ENCODE measurements at regions of chr4 and their contacts with region 1.

Region 1: GRCh38 chr4:139734875-139735380 is 69.3 kb downstream of the MGST2 start:
- DNase-seq: peak; percentile 51 to 93
- H3K4me3 ChIP-seq: peak overlapping the region; percentile 56 to 66
- H3K27ac ChIP-seq: peak overlapping the region; percentile 69 to 81
- H3K4me1 ChIP-seq: peaks cover 0 to 20% of the 10 kb centered on the region in 2 donors
- H3K27me3 ChIP-seq: no peaks in the 10 kb centered on the region
- CTCF ChIP-seq: peak; percentile 89 to 94 (median 91)

Region 2: DNA sequence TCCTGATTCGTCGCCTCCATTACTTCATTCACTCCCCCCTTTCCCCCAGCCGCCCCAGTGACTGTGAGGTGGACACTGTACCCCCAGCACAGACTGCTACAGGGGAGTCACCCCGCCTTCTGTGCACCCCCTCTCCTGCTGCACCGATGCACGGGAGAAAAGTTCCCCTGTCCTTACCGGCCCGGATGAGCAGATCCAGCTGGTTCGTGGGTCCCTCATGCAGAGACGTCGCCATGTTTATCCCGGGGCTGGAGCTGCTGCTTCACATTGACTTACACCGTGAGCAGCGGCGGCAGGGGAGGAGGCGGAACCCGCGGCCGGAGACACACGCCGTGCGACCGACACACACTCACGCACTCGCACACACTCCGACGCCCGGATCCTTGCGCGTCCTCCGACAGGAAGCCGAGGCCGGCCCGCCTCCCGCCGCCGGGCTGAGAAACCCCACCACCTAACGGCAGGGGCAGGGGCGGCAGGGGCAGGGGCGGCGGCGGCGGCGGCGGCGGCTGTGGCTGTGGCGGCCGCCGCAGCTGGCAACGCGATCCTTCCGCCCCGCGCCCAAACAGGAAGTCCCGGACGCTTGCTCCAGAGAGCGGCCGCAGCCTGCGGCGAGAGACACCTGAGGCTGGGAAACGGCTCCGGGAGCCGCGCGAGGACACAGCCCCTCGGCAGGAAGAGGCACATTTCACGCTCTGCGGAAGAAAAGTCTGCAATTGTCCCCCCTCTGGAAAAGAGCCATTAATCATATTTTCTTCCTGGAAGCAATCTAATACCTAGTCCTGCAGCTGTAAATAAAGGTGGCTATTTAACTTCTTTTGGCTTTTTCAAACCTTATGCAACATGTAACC is 650.7 kb before region 1 on chr4:
- intact Hi-C with region 1: no loop called
- DNase-seq: peak; percentile 60 to 93
- H3K4me3 ChIP-seq: peak overlapping the region; percentile 83 to 92
- H3K27ac ChIP-seq: peak overlapping the region; percentile 81 to 97
- H3K4me1 ChIP-seq: peaks cover 0 to 6% of the 10 kb centered on the region in 2 donors
- H3K27me3 ChIP-seq: no peaks in the 10 kb centered on the region
- CTCF ChIP-seq: peak in 2 of 3 experiments; percentile 25 to 40

Region 3: GRCh38 chr4:139656614-139657486 is 78.1 kb before region 1 on chr4:
- intact Hi-C with region 1: loop called (anchors 1 kb)
- DNase-seq: peak in 1 of 2 donors; percentile 72
- H3K4me3 ChIP-seq: peak overlapping the region in 1 of 2 donors; percentile 22
- H3K27ac ChIP-seq: no peak overlapping the region
- H3K4me1 ChIP-seq: peaks cover 0 to 10% of the 10 kb centered on the region in 2 donors
- H3K27me3 ChIP-seq: no peaks in the 10 kb centered on the region
- CTCF ChIP-seq: peak; percentile 63 to 82 (median 82)

Region 4: DNA sequence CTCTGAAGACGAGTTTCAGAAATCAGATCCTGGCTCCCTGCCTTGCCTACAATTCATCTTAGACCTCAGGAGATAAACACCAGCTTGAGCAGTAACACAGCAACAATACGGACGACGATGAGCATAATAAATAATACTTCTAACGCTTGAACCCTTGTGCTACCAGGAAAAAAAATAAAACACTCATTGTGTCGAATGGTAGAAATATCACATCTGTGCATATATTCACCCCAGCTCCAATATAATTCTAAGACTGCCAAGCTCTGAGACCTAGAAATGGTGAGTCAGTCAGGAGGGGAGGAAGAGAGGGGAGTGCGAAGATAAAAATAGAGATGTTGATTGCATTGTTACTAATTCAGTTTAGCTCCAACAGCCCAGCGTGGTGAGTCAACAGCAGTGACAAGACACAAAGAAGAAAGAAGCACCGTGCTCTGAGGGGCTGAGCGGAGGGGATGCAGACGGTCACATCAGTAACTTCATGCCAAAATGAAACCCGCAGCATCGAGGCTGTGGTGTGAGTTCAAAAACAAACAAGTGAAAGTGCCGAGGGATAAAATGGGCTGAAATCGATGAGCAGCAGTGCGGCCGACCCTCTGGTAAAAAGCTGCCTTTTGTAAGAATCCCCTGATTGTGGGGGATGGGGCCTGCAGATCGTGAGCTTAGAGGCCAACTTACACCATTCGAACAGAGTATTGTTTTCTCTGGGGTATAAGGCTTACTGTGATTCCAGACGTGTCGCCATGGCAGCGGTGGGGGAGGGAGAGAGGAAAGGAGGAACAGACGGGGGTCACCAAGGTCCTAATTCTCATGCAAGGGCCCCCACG is 81.1 kb after region 1 on chr4:
- intact Hi-C with region 1: loop called (anchors 5 kb)
- DNase-seq: peak in 1 of 2 donors; percentile 72
- H3K4me3 ChIP-seq: peak overlapping the region; percentile 36 to 74
- H3K27ac ChIP-seq: peak overlapping the region; percentile 52 to 87
- H3K4me1 ChIP-seq: peaks cover 6 to 16% of the 10 kb centered on the region in 2 donors
- H3K27me3 ChIP-seq: no peaks in the 10 kb centered on the region
- CTCF ChIP-seq: no peak

Region 5: DNA sequence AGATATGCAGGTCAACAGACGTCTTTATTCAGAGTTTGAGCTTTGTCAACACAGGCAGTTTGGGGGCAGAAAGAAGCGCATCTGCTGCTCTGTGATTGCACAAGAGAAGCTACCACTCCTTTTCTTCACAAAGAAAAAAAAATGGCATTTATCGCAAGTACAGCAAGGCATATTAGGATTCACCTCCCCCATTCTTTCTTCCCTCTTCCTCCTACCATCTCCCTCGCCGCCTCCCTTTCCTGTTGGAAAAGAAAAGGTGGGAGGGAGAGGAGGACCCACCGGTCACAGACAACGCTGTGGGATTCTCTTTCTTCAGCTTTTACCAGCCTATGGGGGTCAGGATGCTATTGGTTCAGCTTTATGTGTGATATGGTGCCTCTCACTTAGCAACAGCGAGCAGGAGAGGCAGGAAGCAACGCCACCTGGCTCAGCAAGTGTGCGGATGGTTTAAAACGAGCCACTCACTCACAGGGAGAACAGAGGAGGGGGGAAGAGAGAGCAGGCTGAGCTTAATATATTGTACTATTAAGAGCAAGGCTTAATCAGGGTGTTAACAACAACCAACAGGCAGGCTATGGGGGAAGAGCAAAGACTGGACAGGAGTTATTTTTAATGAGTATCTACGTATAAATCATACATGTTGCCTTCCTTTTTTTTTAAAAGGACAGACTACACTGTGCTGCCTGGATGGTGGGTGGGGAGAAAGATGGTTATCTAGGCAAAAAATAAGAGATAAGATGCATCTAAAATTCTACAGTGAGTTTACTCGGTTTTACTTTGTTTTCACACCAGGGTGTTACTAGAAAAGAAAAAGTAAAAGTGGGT is 314.3 kb after region 1 on chr4:
- intact Hi-C with region 1: loop called (anchors 2 kb)
- DNase-seq: peak; percentile 18 to 71
- H3K4me3 ChIP-seq: peak overlapping the region; percentile 52 to 62
- H3K27ac ChIP-seq: peak overlapping the region; percentile 67 to 71
- H3K4me1 ChIP-seq: peaks cover 3 to 9% of the 10 kb centered on the region in 2 donors
- H3K27me3 ChIP-seq: no peaks in the 10 kb centered on the region
- CTCF ChIP-seq: peak in 1 of 3 experiments; percentile 30

Region 6: DNA sequence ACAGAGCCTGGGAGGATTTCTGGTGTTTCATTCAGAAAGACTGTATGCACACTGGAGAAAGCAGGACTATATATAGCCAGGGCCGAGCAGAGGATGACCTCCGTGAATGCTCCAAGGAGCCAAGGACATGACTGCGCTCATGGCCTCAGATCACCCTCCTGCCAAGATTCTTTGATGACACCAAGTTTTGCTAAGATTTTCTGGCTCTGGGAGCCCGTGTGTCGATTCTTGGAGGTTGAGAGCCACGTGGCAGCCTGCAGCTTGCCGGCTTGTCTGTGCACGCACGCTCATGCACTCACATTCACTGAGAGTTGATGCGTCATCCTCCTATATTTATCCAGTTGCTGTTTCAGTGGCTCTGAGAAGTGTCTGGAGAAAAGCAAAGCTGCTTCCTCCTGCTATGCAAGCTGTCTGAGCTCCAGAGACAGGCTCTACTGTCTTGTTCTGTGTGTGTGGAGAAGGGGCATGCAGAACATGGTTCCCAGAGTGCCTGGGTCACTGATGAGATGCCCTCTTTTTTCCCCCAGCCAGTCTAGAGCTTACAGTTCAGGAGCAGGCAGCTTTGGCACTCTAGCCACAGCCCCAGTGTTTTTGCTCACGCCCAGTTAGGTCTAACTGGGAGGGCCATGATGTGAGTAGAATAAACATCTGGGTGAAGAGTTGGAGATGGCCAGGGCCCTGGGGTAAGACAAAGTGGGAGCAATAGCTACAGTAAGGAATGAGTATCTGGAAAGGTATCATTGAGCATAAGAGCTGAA is 573.6 kb after region 1 on chr4:
- intact Hi-C with region 1: loop called (anchors 5 kb)
- DNase-seq: peak; percentile 16 to 81
- H3K4me3 ChIP-seq: peak overlapping the region; percentile 0 to 33
- H3K27ac ChIP-seq: peak overlapping the region; percentile 67
- H3K4me1 ChIP-seq: peaks cover 3 to 13% of the 10 kb centered on the region in 2 donors
- H3K27me3 ChIP-seq: no peaks in the 10 kb centered on the region
- CTCF ChIP-seq: no peak